Spleen (tissue), 13 donors: ENCODE measurements at regions of chr1 and their contacts with region 1.

Region 1: GRCh38 chr1:101357444-101357986 is 120.7 kb downstream of the S1PR1 start:
- DNase-seq: no peak
- H3K4me3 ChIP-seq: no peak overlapping the region
- H3K27ac ChIP-seq: peak overlapping the region in 3 of 8 donors; percentile 19 to 36 (median 21)
- H3K4me1 ChIP-seq: peaks cover 0 to 18% (median 7%) of the 10 kb centered on the region in 6 donors
- H3K27me3 ChIP-seq: no peaks in the 10 kb centered on the region
- CTCF ChIP-seq: peak; percentile 81 to 92 (median 89)
- POLR2A ChIP-seq: no peak

Region 2: DNA sequence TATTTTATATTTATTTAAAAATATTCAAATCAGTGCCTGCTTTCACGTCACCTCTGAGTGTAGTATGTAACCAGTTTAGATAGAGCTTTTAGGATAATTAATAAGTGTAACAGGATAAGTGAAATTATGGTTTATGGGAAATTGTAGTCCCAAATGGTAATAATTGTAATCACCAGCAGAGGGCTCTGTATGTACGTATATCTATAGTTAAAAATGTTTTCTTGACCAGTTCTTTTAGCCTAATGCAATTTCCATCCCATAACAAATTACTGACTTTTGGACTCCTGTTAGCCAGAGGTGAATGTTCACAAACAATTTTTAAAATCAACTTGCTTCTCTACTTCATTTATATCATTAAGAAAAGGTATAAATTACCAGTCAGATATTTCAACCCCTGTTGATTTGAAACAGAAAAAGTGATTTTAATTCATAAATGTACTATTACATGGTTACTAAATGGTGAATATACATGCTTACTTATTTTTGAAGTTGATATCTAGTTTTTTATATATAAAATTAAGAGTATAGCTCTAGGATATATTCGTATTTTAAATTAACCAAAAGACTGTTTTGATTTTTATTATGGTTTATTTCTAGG is 436.3 kb before region 1 on chr1:
- intact Hi-C with region 1: loop called (anchors 5 kb)
- DNase-seq: no peak
- H3K4me3 ChIP-seq: no peak overlapping the region
- H3K27ac ChIP-seq: no peak overlapping the region
- H3K4me1 ChIP-seq: peaks cover 0 to 47% (median 15%) of the 10 kb centered on the region in 6 donors
- H3K27me3 ChIP-seq: no peaks in the 10 kb centered on the region
- CTCF ChIP-seq: peak; percentile 49 to 82 (median 72)
- POLR2A ChIP-seq: no peak

Region 3: GRCh38 chr1:101309334-101310311 is 47.9 kb before region 1 on chr1:
- intact Hi-C with region 1: loop called (anchors 5 kb)
- DNase-seq: peak; percentile 94
- H3K4me3 ChIP-seq: peak overlapping the region; percentile 18 to 63 (median 36)
- H3K27ac ChIP-seq: peak overlapping the region; percentile 78 to 89 (median 81)
- H3K4me1 ChIP-seq: peaks cover 18 to 65% (median 51%) of the 10 kb centered on the region in 6 donors
- H3K27me3 ChIP-seq: no peaks in the 10 kb centered on the region
- CTCF ChIP-seq: peak; percentile 59 to 84 (median 79)
- POLR2A ChIP-seq: no peak

Region 4: GRCh38 chr1:101667761-101668160 is 310.2 kb after region 1 on chr1:
- intact Hi-C with region 1: no loop called
- DNase-seq: no peak
- H3K4me3 ChIP-seq: no peak overlapping the region
- H3K27ac ChIP-seq: no peak overlapping the region
- H3K4me1 ChIP-seq: no peaks in the 10 kb centered on the region
- H3K27me3 ChIP-seq: no peaks in the 10 kb centered on the region
- CTCF ChIP-seq: no peak
- POLR2A ChIP-seq: no peak